ENCODE measurements at regions of chr3 and their contacts with region 1.

Region 1: DNA sequence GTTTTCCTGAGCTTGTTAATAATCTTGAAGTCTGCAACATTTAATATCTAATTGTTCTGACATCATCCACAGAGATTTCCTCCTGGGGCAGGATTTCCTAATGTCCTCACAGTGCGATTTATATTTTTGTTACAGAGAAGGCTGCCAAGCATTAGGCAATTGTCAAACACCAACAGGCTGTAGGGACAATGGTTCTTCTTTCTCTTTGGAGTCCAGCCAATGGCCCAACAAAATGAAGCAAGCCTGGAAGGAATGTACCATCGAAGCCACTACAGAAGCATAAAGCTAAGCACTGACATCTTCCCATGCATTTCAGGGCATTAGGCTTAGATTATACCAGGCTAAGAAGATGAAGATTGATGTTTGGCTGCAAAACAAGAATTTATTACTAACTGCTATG is 173.0 kb upstream of the FRMD4B start:
- DNase-seq: peak in 4 of 5 donors; percentile 45 to 63 (median 55)
- ATAC-seq: peak; percentile 74 to 93 (median 92)
- H3K4me3 ChIP-seq: no peak overlapping the region
- H3K27ac ChIP-seq: peak overlapping the region in 1 of 12 donors; percentile 38
- H3K4me1 ChIP-seq: peaks cover 0 to 33% (median 10%) of the 10 kb centered on the region in 12 donors
- H3K27me3 ChIP-seq: no peaks in the 10 kb centered on the region
- CTCF ChIP-seq: no peak
- POLR2A ChIP-seq: no peak

Region 2: GRCh38 chr3:69642606-69643005 is 83.7 kb after region 1 on chr3:
- intact Hi-C with region 1: loop called in 1 of 10 experiments (anchors 5 kb)
- DNase-seq: no peak
- ATAC-seq: peak in 1 of 4 donors; percentile 45
- H3K4me3 ChIP-seq: peak overlapping the region in 1 of 12 donors; percentile 7
- H3K27ac ChIP-seq: no peak overlapping the region
- H3K4me1 ChIP-seq: peaks cover 0 to 5% (median 0%) of the 10 kb centered on the region in 12 donors
- H3K27me3 ChIP-seq: no peaks in the 10 kb centered on the region
- CTCF ChIP-seq: no peak
- POLR2A ChIP-seq: no peak

Region 3: GRCh38 chr3:69649120-69650065 is 90.5 kb after region 1 on chr3:
- intact Hi-C with region 1: loop called in 2 of 10 experiments (anchors 5 to 10 kb)
- DNase-seq: no peak
- ATAC-seq: peak; percentile 74 to 83 (median 78)
- H3K4me3 ChIP-seq: peak overlapping the region in 1 of 12 donors; percentile 8
- H3K27ac ChIP-seq: peak overlapping the region in 3 of 12 donors; percentile 16 to 69 (median 50)
- H3K4me1 ChIP-seq: peaks cover 0 to 32% (median 16%) of the 10 kb centered on the region in 12 donors
- H3K27me3 ChIP-seq: no peaks in the 10 kb centered on the region
- CTCF ChIP-seq: no peak
- POLR2A ChIP-seq: no peak

Measured in heart left ventricle (tissue), 16 donors.